Body of pancreas (tissue), 4 donors: ENCODE measurements at regions of chr11 and their contacts with region 1.

Region 1: DNA sequence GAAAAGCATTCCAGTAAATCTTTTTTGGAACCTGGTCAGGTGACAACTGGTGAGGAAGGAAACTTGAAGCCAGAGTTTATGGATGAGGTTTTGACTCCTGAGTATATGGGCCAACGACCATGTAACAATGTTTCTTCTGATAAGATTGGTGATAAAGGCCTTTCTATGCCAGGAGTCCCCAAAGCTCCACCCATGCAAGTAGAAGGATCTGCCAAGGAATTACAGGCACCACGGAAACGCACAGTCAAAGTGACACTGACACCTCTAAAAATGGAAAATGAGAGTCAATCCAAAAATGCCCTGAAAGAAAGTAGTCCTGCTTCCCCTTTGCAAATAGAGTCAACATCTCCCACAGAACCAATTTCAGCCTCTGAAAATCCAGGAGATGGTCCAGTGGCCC is 24.1 kb upstream of the TTC36 start:
- DNase-seq: no peak
- ATAC-seq: no peak
- H3K4me3 ChIP-seq: no peak overlapping the region
- H3K27ac ChIP-seq: no peak overlapping the region
- H3K4me1 ChIP-seq: no peaks in the 10 kb centered on the region
- H3K27me3 ChIP-seq: no peaks in the 10 kb centered on the region
- CTCF ChIP-seq: no peak
- POLR2A ChIP-seq: no peak

Region 2: DNA sequence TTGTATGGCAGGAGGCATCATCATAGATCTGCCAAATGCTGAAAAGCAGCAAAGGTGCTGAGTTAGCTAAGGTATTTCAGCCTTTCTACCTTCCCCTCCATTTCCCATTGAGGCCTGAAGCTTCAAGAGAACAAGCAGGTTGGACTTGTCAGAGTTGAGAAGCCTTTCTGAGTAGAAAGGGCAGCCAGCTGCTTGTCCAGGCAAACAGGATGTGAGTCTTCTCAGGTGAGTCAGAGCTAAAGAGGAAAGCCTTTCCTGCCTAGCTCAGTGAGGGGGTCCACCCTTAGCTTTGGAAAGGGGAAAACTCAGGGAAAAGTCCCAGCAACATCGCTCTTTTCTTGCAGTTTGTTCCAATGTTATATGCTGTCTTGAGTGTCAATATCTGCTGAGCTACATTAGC is 225.9 kb before region 1 on chr11:
- intact Hi-C with region 1: no loop called
- DNase-seq: no peak
- ATAC-seq: no peak
- H3K4me3 ChIP-seq: no peak overlapping the region
- H3K27ac ChIP-seq: no peak overlapping the region
- H3K4me1 ChIP-seq: peaks cover 12% of the 10 kb centered on the region
- H3K27me3 ChIP-seq: no peaks in the 10 kb centered on the region
- CTCF ChIP-seq: no peak
- POLR2A ChIP-seq: no peak

Region 3: GRCh38 chr11:118398791-118399559 is 104.2 kb before region 1 on chr11:
- intact Hi-C with region 1: loop called (anchors 10 kb)
- DNase-seq: no peak
- ATAC-seq: no peak
- H3K4me3 ChIP-seq: no peak overlapping the region
- H3K27ac ChIP-seq: no peak overlapping the region
- H3K4me1 ChIP-seq: peaks cover 24% of the 10 kb centered on the region
- H3K27me3 ChIP-seq: no peaks in the 10 kb centered on the region
- CTCF ChIP-seq: no peak
- POLR2A ChIP-seq: no peak

Region 4: GRCh38 chr11:118435893-118436624 is 67.2 kb before region 1 on chr11 and contains the start of gene KMT2A:
- intact Hi-C with region 1: no loop called
- DNase-seq: peak; percentile 98 to 99 (median 98)
- ATAC-seq: peak; percentile 88
- H3K4me3 ChIP-seq: peak within 1 kb of the TSS; percentile 94 to 99
- H3K27ac ChIP-seq: peak within 1 kb of the TSS; percentile 89 to 92 (median 91)
- H3K4me1 ChIP-seq: peaks cover 43% of the 10 kb centered on the region
- H3K27me3 ChIP-seq: no peaks in the 10 kb centered on the region
- CTCF ChIP-seq: peak in 4 of 7 experiments; percentile 90 to 100 (median 96)
- POLR2A ChIP-seq: peak in 2 of 3 donors; percentile 54 to 61
- total RNA-seq, gene KMT2A: 62.6 to 209 TPM

Region 5: DNA sequence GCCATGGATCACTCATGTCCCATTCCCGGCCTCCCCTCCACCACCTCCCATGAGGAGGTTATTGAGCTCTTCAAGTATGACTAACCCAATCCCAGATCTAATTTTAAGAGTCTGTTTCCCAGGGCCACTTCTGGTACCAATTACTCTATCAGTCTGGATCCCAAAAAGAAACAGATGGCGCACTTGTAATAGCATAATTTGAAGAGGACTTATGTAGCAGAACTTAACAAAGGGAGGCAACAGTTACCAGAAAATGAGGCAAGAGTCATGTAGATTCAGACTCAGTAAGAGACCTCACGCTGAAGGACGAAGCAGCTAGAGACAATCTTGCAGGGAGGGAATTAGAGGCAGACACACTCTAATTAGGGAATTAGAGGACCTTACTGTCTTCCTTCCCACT is 240.8 kb after region 1 on chr11:
- intact Hi-C with region 1: no loop called
- DNase-seq: no peak
- ATAC-seq: no peak
- H3K4me3 ChIP-seq: no peak overlapping the region
- H3K27ac ChIP-seq: no peak overlapping the region
- H3K4me1 ChIP-seq: no peaks in the 10 kb centered on the region
- H3K27me3 ChIP-seq: no peaks in the 10 kb centered on the region
- CTCF ChIP-seq: no peak
- POLR2A ChIP-seq: no peak

Region 6: DNA sequence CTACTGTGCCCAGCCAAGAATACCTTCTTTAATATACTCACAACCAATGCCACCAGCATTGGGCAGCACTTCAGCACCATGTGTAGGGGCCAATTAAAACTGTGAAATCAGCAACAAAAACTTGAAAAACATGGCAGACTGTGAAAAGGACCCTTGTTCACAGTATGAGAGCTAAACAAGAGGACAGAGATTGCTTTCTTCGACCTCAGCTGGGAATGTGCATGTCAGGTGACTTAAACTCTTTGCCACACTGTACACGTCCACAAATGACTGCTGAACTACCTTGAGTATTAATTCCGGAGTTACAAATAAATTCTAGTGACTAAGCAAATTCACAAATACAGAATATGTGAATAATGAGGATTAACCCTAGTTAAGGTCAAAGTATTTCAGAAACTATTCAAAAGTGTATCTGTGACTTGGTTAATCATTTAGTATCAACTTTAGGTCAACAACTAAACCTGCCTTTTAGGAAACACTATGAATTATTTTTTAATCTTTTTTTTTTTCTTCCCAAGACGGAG is 254.7 kb after region 1 on chr11:
- intact Hi-C with region 1: loop called (anchors 10 kb)
- DNase-seq: no peak
- ATAC-seq: no peak
- H3K4me3 ChIP-seq: no peak overlapping the region
- H3K27ac ChIP-seq: peak overlapping the region in 1 of 4 donors; percentile 19
- H3K4me1 ChIP-seq: no peaks in the 10 kb centered on the region
- H3K27me3 ChIP-seq: no peaks in the 10 kb centered on the region
- CTCF ChIP-seq: no peak
- POLR2A ChIP-seq: no peak

Region 7: DNA sequence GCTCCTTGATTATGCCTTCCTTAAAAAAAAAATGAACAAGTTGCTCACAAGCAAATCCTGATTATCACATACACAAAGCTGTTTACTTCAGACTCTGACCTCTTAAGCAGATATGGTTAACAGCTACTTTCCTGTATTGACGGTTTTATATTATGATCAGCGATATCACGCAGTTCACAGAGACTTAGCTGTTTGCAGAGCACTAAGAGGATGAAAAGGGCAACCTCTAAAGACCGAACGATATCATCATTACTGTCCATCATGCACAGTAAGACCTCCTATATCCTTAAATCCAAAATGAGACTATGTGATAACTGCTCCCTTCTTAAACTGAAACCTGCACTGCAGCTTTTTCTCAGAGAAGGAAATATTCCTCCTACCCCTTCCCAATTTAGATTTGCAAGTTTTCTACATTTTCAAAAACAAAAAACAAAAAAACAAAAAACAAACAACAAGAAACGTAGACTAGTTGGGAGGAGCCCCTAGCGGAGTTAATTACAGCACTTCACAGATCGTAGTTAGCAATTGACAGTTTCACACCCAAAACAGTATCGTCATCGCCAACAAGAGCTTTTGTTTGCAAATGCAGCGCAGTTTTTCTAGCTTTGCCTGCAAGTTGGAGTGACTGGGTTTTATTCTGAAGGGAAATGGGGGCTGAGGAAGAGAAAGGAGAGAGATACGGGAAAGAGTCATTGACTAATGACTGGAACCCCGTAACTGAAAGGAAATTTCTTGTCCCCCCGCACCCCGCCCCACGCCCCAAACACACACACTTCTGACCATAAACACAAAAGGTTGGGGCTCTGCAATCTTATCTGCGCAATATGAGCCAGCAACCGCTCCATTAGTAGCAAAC is 286.5 kb after region 1 on chr11:
- intact Hi-C with region 1: no loop called
- DNase-seq: peak in 3 of 4 donors; percentile 25 to 49 (median 29)
- ATAC-seq: no peak
- H3K4me3 ChIP-seq: peak overlapping the region; percentile 53 to 71
- H3K27ac ChIP-seq: peak overlapping the region; percentile 98 to 99 (median 98)
- H3K4me1 ChIP-seq: peaks cover 53% of the 10 kb centered on the region
- H3K27me3 ChIP-seq: no peaks in the 10 kb centered on the region
- CTCF ChIP-seq: peak in 1 of 7 experiments; percentile 6
- POLR2A ChIP-seq: peak in 2 of 3 donors; percentile 50 to 52